PC-9 (cell line): ENCODE measurements at regions of chr7 and their contacts with region 1.

Region 1: DNA sequence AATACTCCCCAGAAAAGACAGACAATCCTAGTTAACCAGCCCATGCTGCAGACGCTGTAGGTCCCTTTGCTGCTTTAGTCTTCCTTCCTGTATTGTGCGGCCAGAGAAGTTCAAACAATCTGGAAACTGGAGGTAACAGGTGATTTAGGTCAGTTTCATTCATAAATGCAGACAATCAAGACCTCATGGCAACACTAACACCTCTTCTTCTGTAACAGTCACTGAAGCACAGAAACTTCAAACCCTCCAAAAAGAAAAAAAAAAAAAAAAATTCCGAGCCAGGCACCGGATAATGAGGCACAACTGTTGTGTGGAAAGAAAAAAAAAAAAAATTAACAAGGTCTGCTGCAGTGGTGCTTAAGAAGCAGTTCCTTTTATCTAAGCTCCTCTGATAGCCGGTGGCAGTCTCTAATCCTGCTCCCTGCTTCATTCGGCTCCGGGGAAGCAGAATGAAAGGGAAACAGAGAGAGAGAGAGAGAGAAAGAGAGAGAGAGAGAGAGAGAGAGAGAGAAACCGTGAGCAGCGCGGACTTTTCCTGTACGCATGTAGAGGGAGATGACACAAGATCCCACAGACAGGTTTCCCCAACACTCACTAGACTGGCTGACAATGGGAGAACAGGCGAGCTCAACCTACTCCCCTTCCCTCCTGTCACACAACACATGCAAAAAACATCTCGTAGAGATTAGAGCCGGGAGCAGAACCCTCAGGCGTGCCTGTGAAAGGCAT is at the start of gene SEMA3A:
- DNase-seq: peak in 1 of 2 experiments; percentile 50
- H3K4me3 ChIP-seq: peak within 1 kb of the TSS; percentile 56
- H3K27ac ChIP-seq: no peak within 1 kb of the TSS
- H3K4me1 ChIP-seq: no peaks in the 10 kb centered on the region
- H3K27me3 ChIP-seq: no peaks in the 10 kb centered on the region
- CTCF ChIP-seq: peak; percentile 22; the same call in 1 of the 2 replicates
- total RNA-seq, gene SEMA3A: 6.1 and 6.3 TPM in 2 replicates

Region 2: DNA sequence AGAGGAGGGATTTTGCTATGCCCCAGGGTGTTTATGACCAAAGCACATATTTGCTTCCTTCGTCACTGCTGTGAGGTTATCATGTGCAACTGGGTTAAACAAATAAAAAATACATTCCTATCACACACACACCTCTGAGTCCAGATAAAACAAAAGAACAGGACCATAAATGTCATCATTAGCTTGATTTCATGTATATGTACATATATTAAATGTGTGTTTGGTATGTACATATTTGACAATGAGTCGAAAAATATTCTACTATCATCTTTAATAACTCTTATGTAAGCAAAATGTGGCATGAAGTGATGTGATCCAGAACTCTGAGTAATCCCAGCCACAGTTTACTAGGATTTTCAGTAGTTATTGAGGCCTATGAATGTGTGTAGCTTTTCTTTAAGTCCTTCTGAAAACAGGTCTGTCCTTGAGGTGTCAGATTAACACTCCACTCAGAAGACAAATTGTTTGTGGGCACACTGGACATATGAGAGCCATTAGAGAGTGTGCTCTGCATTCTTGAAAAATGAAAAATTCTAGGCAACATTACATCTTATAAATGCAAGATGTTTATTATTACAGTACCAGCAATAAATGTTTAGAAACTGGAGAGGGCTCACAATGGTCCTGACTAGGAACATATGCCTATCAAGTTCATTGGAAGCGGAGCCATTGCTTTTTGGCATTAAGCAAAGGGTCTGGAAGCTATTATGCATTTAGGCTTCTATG is 334.9 kb after region 1 on chr7:
- CTCF ChIA-PET with region 1: no interaction called
- POLR2A ChIA-PET with region 1: no interaction called
- intact Hi-C with region 1: loop called (anchors 5 kb)
- DNase-seq: peak; percentile 63 to 89
- H3K4me3 ChIP-seq: no peak overlapping the region
- H3K27ac ChIP-seq: peak overlapping the region; percentile 66
- H3K4me1 ChIP-seq: peaks cover 27% of the 10 kb centered on the region
- H3K27me3 ChIP-seq: no peaks in the 10 kb centered on the region
- CTCF ChIP-seq: no peak

Region 3: GRCh38 chr7:84701524-84702306 is 507.0 kb after region 1 on chr7:
- CTCF ChIA-PET with region 1: no interaction called
- POLR2A ChIA-PET with region 1: no interaction called
- intact Hi-C with region 1: loop called (anchors 10 kb)
- DNase-seq: peak in 1 of 2 experiments; percentile 69
- H3K4me3 ChIP-seq: no peak overlapping the region
- H3K27ac ChIP-seq: no peak overlapping the region
- H3K4me1 ChIP-seq: no peaks in the 10 kb centered on the region
- H3K27me3 ChIP-seq: no peaks in the 10 kb centered on the region
- CTCF ChIP-seq: no peak